Activated naive CD4-positive, alpha-beta T cell treated with anti-CD3 and anti-CD28 coated beads for 36 hours (primary cell): ENCODE measurements at regions of chr12 and their contacts with region 1.

Region 1: DNA sequence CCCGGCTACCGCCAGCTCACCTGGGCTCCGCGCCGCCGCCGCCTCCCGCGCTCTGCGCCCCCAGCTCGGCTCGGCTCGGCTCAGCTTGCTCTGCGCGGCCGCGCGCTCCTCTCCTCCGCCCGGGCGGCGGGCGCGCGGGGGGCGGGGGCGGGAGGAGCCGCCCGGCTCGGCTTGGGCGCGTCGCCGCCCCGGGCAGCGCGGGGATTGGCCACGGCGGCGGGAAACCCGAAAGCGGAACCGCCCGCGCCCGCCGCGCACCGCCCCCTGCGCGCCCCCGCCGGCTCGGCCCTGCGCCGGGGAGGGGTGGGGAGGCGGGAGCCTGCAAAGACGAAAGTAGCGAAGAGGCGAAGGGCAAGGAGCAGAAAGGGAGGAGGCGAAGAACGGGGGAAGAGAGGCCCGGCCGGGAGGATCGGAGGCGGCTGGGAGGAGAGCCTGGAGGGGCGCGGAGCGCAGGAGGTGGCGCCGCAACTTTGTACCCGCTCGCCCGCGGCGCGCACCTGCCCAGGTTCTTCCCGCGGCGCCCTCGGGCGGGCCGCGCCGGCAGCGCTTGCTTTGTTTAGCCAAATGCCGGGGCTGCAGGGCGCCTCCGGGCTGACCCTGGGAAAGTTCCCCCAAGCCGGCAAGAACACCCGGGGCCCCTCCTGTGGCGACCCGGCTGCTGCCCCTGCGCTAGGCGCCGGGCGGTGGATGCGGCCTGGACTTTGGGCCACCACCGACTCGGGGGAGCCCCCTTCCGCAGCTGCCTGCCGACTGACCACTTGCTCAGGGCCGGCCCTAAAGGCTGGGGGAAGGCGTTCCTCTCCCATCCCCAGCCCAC is at the start of gene CAMKK2:
- DNase-seq: peak; percentile 82
- H3K4me3 Mint-ChIP-seq: peak within 1 kb of the TSS; percentile 90
- H3K27ac Mint-ChIP-seq: peak within 1 kb of the TSS; percentile 65
- H3K4me1 Mint-ChIP-seq: peaks cover 24% of the 10 kb centered on the region
- H3K27me3 Mint-ChIP-seq: no peaks in the 10 kb centered on the region
- total RNA-seq, gene CAMKK2: 14.8 to 18.8 TPM

Region 2: GRCh38 chr12:121240484-121241101 is 56.2 kb before region 1 on chr12:
- CTCF ChIA-PET with region 1: interaction called, 3 read pairs
- intact Hi-C with region 1: loop called (anchors 1 kb)
- DNase-seq: peak; percentile 84
- H3K4me3 Mint-ChIP-seq: peak overlapping the region; percentile 32
- H3K27ac Mint-ChIP-seq: peak overlapping the region; percentile 75
- H3K4me1 Mint-ChIP-seq: peaks cover 34% of the 10 kb centered on the region
- H3K27me3 Mint-ChIP-seq: no peaks in the 10 kb centered on the region

Region 3: DNA sequence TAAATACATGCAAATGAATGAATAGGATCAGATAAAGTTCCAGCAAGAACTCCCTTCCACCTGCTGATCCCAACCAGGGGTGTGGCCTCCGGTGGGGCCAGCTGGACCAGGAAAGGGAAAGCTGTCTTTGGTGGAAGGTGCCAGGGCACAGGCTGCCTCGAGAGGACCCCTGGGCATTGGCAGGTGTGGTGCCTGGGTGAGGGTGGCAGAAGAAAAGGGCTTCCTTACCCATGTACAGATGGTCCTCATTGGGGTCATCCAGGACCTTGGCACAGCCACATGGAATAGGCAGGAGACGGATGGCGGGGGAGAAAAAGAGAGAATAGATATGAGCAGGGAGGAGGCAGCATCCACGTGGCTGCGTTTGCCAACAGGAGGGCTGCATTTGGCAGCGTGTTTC is 36.7 kb before region 1 on chr12:
- CTCF ChIA-PET with region 1: no interaction called
- intact Hi-C with region 1: no loop called
- DNase-seq: no peak
- H3K4me3 Mint-ChIP-seq: no peak overlapping the region
- H3K27ac Mint-ChIP-seq: no peak overlapping the region
- H3K4me1 Mint-ChIP-seq: no peaks in the 10 kb centered on the region
- H3K27me3 Mint-ChIP-seq: no peaks in the 10 kb centered on the region

Region 4: DNA sequence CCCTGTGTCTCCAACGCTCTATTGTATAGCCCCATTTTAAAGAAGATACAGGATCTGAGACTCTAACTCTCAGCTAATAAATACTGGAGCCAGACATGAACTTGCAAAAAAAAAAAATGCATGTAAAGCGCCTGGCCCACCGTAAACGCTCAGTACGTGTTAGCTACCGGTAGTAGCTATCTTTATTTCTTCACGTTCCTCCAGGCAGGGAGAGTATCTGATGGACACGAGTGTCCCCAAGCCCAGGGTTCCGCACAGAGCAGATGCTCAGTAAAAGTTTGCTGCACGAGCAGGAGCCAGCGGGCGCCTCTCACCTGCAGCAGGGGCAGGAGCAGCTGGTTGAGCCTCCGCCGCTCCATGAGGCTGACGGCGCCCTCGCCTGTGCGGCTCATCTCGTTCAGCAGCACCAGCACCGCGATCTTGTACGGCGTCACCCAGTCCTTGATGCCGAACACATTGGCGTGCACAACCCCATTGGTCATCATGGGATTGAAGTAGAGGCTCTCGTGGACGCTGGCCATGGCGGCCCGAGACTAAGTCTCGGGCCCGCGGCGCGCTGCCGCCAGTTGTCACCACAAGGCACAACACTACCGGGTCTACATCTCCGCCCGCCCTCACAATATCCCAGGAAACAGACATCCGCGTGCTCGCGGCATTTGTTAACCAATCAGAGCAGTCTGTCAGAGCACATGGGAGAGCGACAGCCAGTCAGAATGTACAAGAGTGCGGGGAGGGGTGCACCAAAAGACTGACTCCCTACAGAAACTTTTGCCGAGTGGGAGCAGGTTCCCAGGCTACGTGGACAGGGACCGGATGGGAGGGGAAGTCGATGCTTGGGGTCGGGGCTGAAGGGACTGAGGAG is 55.2 kb after region 1 on chr12 and contains the start of gene ANAPC5:
- CTCF ChIA-PET with region 1: no interaction called
- intact Hi-C with region 1: loop called (anchors 1 kb)
- DNase-seq: peak; percentile 96
- H3K4me3 Mint-ChIP-seq: peak within 1 kb of the TSS; percentile 98
- H3K27ac Mint-ChIP-seq: peak within 1 kb of the TSS; percentile 86
- H3K4me1 Mint-ChIP-seq: peaks cover 25% of the 10 kb centered on the region
- H3K27me3 Mint-ChIP-seq: no peaks in the 10 kb centered on the region
- total RNA-seq, gene ANAPC5: 117 to 119 TPM